CD8-positive, alpha-beta T cell (primary cell): ENCODE measurements at regions of chr22 and their contacts with region 1.

Region 1: DNA sequence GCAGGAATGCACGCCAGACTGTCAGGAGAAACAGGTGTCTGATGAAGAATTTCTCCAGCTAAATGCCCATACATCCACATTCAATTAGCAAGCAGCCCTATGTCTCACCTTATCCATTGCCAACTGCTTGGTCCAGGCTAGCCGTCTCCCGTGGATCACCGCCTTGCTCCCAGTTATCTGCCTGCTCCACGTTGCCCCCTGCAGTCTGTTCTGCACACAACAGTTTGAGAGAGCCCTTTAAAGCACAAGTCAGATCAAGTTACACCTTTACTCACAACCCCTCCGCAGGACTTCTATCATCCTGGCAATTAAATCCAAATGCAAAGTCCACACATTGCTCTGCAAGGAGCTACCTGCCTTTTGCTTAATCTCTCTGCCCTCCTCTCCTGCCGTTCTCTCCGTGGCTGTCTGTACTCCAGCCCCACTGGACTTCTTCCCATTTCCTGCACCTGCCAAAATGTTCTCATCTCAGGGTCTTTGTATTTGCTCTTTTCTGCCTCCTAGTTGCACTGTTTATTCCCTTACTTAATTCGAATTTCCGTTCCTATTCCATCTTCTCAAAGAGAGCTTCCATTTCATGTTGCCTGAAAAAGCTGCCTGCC is 185.3 kb upstream of the LARGE1 start:
- DNase-seq: peak in 3 of 9 experiments; percentile 1 to 10 (median 2)
- ATAC-seq: no peak
- H3K4me3 ChIP-seq: no peak overlapping the region
- H3K4me3 Mint-ChIP-seq: no peak overlapping the region
- H3K27ac ChIP-seq: no peak overlapping the region
- H3K27ac Mint-ChIP-seq: no peak overlapping the region
- H3K4me1 ChIP-seq: no peaks in the 10 kb centered on the region
- H3K4me1 Mint-ChIP-seq: no peaks in the 10 kb centered on the region
- H3K27me3 ChIP-seq: no peaks in the 10 kb centered on the region
- H3K27me3 Mint-ChIP-seq: peaks cover 5% of the 10 kb centered on the region
- CTCF ChIP-seq: no peak

Region 2: GRCh38 chr22:34077380-34077779 is 28.2 kb before region 1 on chr22:
- CTCF ChIA-PET with region 1: no interaction called
- POLR2A ChIA-PET with region 1: no interaction called
- intact Hi-C with region 1: no loop called
- DNase-seq: no peak
- ATAC-seq: no peak
- H3K4me3 ChIP-seq: no peak overlapping the region
- H3K4me3 Mint-ChIP-seq: no peak overlapping the region
- H3K27ac ChIP-seq: no peak overlapping the region
- H3K27ac Mint-ChIP-seq: no peak overlapping the region
- H3K4me1 ChIP-seq: no peaks in the 10 kb centered on the region
- H3K4me1 Mint-ChIP-seq: no peaks in the 10 kb centered on the region
- H3K27me3 ChIP-seq: no peaks in the 10 kb centered on the region
- H3K27me3 Mint-ChIP-seq: no peaks in the 10 kb centered on the region
- CTCF ChIP-seq: no peak

Region 3: DNA sequence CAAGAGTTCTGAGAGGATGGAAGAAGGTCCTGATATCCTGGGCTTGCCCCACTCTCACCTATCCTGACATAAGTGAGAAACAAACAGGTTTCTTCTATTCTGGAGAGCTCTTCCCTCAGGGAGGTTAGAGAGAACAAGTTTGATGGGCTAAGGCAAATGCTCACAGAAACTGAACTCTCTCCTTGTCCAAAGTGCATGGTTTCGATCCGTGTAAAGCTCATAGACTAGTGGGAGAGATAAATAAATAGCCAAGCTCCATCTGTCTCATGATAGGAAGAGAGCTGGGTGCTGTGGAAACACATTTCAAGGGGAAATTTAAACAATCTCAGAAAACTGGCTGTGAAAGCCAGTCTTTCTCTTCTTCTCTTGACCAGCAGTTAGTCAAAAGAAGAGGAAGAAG is 274.3 kb after region 1 on chr22:
- CTCF ChIA-PET with region 1: no interaction called
- POLR2A ChIA-PET with region 1: no interaction called
- intact Hi-C with region 1: loop called in 1 of 2 experiments (anchors 5 kb)
- DNase-seq: no peak
- ATAC-seq: no peak
- H3K4me3 ChIP-seq: no peak overlapping the region
- H3K4me3 Mint-ChIP-seq: no peak overlapping the region
- H3K27ac ChIP-seq: no peak overlapping the region
- H3K27ac Mint-ChIP-seq: no peak overlapping the region
- H3K4me1 ChIP-seq: no peaks in the 10 kb centered on the region
- H3K4me1 Mint-ChIP-seq: no peaks in the 10 kb centered on the region
- H3K27me3 ChIP-seq: no peaks in the 10 kb centered on the region
- H3K27me3 Mint-ChIP-seq: no peaks in the 10 kb centered on the region
- CTCF ChIP-seq: no peak